ENCODE measurements at regions of chrX and their contacts with region 1.

Region 1: GRCh38 chrX:120664081-120664480 is 34.2 kb upstream of the C1GALT1C1 start:
- DNase-seq: no peak
- H3K4me3 ChIP-seq: no peak overlapping the region
- CTCF ChIP-seq: no peak

Region 2: GRCh38 chrX:120485638-120486520 is 178.2 kb before region 1 on chrX:
- CTCF ChIA-PET with region 1: interaction called, 11 read pairs
- POLR2A ChIA-PET with region 1: no interaction called
- DNase-seq: no peak
- H3K4me3 ChIP-seq: peak overlapping the region; percentile 58
- CTCF ChIP-seq: peak; percentile 38

Region 3: GRCh38 chrX:120499301-120500072 is 164.6 kb before region 1 on chrX:
- CTCF ChIA-PET with region 1: interaction called, 48 read pairs
- POLR2A ChIA-PET with region 1: no interaction called
- DNase-seq: no peak
- H3K4me3 ChIP-seq: no peak overlapping the region
- CTCF ChIP-seq: no peak

Region 4: GRCh38 chrX:120514236-120514635 is 149.8 kb before region 1 on chrX:
- CTCF ChIA-PET with region 1: interaction called, 10 read pairs
- POLR2A ChIA-PET with region 1: no interaction called
- DNase-seq: no peak
- H3K4me3 ChIP-seq: no peak overlapping the region
- CTCF ChIP-seq: no peak